Mammary epithelial cell (primary cell): ENCODE measurements at regions of chr1 and their contacts with region 1.

Region 1: DNA sequence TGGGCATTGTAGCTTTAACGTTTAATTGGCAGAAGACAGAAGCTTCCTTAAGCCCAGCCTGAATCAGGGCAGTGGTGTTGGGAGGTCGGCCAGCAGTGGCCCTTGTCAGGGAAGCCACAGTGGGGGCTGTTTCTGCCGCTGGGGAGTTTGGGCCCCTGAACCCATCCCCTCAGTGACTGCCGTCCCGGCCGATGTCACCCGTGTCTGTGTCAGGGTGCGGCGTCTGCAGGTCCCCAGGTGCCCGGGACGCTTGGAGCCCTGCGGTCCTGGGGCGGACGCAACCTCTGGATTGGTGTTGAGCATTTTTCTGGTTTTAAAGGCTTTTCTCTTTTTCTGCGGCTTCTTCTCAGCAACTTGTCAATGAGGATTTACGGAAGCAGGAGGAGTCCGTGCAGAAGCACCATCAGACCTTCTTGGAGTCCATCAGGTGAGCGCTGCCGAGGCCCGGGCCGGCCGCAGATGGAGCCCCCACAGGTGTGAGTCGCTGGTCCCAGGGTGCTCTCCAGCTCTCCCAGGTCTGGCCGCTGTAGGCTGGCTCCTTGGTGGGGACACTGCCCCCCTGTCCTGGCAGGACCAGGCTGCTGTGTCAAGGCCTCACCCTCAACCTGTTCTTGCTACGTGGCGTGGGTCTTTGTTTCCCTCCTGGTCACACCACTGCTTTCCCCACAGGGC is 2.3 kb downstream of the ATAD3C start:
- DNase-seq: no peak
- H3K4me3 ChIP-seq: no peak overlapping the region
- H3K27ac ChIP-seq: no peak overlapping the region
- H3K4me1 ChIP-seq: no peaks in the 10 kb centered on the region
- H3K27me3 ChIP-seq: no peaks in the 10 kb centered on the region
- CTCF ChIP-seq: no peak

Region 2: GRCh38 chr1:1489861-1490260 is 38.0 kb after region 1 on chr1:
- CTCF ChIA-PET with region 1: no interaction called
- dilution Hi-C with region 1: loop called (anchors 5 kb)
- in situ Hi-C with region 1: no loop called
- intact Hi-C with region 1: no loop called
- DNase-seq: no peak
- H3K4me3 ChIP-seq: no peak overlapping the region
- H3K27ac ChIP-seq: no peak overlapping the region
- H3K4me1 ChIP-seq: no peaks in the 10 kb centered on the region
- H3K27me3 ChIP-seq: no peaks in the 10 kb centered on the region
- CTCF ChIP-seq: no peak